ENCODE measurements at regions of chr16 and their contacts with region 1.

Region 1: GRCh38 chr16:50709053-50709684 is 15.8 kb downstream of the NOD2 start:
- DNase-seq: no peak
- H3K4me3 Mint-ChIP-seq: peak overlapping the region; percentile 46
- H3K27ac Mint-ChIP-seq: peak overlapping the region; percentile 76
- H3K4me1 Mint-ChIP-seq: peaks cover 48% of the 10 kb centered on the region
- H3K27me3 Mint-ChIP-seq: no peaks in the 10 kb centered on the region

Region 2: DNA sequence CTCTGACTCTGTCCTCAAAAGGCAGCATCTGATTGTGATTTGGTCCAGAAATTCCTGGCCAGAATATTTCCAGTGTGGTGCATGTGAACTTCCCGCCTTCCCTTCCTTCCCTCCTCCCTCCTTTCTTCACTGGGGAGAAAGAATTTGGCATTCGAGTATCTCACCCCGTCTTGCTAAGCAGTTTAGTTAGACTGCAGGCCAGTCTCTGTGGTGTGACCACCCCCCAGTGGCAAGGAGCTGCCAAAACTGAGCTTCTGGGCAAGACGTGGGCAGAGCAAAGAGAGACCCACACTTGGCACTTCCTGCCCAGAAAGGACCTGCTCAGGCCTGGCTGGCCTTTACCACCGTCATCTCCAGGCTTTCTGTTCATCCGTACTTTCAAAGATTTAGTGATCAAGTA is 64.4 kb before region 1 on chr16:
- intact Hi-C with region 1: no loop called
- DNase-seq: peak; percentile 73
- H3K4me3 Mint-ChIP-seq: no peak overlapping the region
- H3K27ac Mint-ChIP-seq: no peak overlapping the region
- H3K4me1 Mint-ChIP-seq: no peaks in the 10 kb centered on the region
- H3K27me3 Mint-ChIP-seq: no peaks in the 10 kb centered on the region

Region 3: DNA sequence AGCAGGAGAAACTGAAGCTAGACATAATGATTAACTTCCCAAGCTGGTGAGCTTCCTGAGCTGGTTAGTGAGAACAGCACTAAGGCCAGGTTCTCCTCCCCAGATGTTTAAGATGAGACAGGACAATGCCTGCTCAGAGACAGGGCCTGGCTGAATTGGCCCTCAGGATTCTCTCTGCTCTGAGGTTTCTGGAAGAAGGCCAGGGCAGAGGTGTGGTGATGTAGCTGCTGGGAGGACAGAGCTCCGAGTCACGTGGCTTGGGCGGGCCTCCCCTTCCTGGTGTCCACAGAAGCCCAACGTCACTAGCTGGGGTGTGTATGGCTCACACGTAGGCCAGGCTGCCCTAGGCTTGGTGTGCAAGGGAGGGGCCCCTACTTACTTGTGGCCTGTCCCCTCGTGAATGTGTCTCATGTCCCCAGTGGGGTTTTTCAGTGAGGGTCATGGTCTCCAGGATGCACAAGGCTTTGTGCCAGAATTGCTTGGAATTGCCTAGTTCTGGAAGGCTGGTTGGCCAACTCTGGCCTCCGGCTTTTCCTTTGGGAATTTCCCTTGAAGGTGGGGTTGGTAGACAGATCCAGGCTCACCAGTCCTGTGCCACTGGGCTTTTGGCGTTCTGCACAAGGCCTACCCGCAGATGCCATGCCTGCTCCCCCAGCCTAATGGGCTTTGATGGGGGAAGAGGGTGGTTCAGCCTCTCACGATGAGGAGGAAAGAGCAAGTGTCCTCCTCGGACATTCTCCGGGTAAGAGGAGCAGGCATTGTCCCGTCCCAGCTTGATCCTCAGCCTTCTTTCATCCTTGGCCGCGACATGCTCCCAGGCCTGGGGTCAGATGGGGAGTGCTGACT is 12.4 kb before region 1 on chr16:
- intact Hi-C with region 1: loop called (anchors 1 kb)
- DNase-seq: peak; percentile 72
- H3K4me3 Mint-ChIP-seq: peak overlapping the region; percentile 81
- H3K27ac Mint-ChIP-seq: peak overlapping the region; percentile 29
- H3K4me1 Mint-ChIP-seq: peaks cover 70% of the 10 kb centered on the region
- H3K27me3 Mint-ChIP-seq: peaks cover 5% of the 10 kb centered on the region

Region 4: GRCh38 chr16:50741808-50742575 is 32.8 kb after region 1 on chr16 and contains the start of gene CYLD:
- intact Hi-C with region 1: loop called (anchors 2 kb)
- DNase-seq: peak; percentile 100
- H3K4me3 Mint-ChIP-seq: peak within 1 kb of the TSS; percentile 95
- H3K27ac Mint-ChIP-seq: peak within 1 kb of the TSS; percentile 96
- H3K4me1 Mint-ChIP-seq: peaks cover 51% of the 10 kb centered on the region
- H3K27me3 Mint-ChIP-seq: no peaks in the 10 kb centered on the region
- total RNA-seq, gene CYLD: 178 TPM in 2 replicates

Region 5: DNA sequence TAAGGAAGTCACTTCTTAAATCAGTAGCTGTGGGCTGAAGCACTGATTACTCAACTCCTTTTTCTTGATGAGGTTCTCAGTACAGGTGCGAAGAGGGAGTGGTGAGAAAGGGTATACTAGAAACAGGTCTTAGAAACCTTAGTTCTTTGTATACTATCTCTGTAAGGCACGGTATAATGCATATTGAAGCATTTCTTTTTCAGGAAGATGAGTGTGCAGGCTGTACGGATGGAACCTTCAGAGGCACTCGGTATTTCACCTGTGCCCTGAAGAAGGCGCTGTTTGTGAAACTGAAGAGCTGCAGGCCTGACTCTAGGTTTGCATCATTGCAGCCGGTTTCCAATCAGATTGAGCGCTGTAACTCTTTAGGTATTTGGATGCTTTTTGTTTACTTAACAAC is 71.9 kb after region 1 on chr16:
- intact Hi-C with region 1: no loop called
- DNase-seq: no peak
- H3K4me3 Mint-ChIP-seq: peak overlapping the region; percentile 51
- H3K27ac Mint-ChIP-seq: peak overlapping the region; percentile 75
- H3K4me1 Mint-ChIP-seq: peaks cover 39% of the 10 kb centered on the region
- H3K27me3 Mint-ChIP-seq: no peaks in the 10 kb centered on the region